GM23248 (cell line): ENCODE measurements at regions of chr2 and their contacts with region 1.

Region 1: DNA sequence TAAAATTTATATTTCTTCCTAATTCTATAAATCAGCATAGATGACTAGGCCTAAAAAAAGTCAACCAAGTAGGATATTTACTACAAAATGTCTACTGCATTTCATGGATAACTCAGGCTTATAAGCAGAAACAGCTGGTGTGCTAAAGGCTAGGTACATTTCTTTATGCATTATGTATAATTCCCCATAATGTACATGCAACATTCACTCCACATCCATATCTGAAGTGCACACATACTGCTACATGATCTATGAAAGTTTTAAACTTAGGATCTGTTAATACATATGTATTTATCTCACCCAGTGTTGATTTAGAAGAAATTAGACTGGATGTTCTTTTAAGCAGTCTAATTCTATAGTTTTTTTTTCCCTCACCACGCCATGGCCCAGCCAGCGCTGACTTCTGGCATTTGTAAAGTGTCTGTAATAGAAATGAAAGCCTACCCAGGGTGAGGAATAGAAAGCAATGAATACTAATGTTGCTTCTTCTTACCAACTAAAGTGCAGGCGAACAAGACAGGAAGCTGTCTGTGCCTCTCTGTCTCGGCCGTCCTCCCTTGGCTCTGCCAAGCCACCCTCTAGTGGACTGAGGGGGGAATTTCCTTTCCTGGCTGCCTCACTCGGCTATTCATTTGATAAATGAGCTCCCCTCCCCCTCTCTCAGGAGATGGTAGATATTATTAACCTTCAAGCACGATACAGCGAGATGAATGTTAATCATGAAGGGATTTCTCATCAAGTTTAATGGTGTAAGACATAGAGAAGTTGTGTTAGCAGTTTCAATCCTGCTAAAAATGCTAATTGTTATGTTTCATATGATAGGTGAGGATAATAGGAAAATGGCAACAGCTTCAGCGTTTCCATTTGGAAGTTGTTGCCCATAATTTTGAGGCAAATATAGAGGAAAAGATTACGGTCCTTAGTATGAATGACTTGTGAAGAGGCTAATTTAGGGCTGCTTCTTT is 384.5 kb downstream of the MTX2 start:
- DNase-seq: peak; percentile 91
- H3K4me3 ChIP-seq: peak overlapping the region; percentile 19; the same call in 1 of the 2 replicates
- H3K27ac ChIP-seq: peak overlapping the region; percentile 23
- H3K4me1 ChIP-seq: peaks cover 14% of the 10 kb centered on the region
- H3K27me3 ChIP-seq: no peaks in the 10 kb centered on the region

Region 2: DNA sequence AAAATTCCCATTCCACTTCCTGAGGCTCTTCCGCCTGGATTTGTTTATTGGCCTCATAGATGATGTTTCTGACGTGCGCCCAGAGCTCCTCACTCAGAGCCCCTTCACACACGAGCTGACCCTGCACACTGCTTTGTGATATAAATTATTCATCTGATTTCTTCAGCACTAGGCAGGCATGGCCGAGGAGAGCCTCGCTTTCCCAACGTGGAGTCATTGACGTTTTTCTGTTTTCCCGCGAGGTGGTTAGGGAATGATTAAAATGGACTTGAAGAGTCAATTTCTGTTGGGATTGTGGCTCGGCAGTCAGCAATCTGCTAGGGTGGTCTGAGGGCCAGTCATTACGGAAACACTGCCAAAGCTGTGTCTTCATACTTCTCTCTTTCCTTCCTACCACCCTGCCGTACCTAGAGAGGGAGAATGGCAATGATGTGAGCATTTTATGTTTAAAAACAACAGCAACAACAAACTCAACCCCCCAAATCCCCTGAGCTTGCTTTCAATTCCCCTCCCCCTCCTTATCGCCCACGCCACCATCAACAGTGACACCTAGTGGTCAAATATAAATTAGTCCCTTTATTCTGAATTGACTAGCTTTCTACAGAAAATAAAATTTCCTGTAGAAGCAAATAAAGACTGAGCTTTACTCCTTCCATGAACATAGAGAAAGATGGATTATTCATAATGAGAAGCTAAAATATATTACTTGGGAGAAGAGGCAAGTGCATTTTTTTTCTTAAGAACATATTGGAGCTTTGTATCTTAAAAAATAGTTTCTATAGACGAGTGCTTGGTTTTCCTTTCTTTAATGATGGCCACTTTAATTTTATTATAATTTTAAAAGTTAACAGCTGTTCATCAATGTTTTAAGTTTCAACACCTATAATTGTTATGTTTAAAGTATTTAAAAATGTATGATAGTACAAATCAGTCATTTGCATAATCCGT is 99.4 kb before region 1 on chr2:
- in situ Hi-C with region 1: no loop called
- DNase-seq: peak; percentile 79
- H3K4me3 ChIP-seq: peak overlapping the region; percentile 66
- H3K27ac ChIP-seq: peak overlapping the region; percentile 79
- H3K4me1 ChIP-seq: peaks cover 22% of the 10 kb centered on the region
- H3K27me3 ChIP-seq: no peaks in the 10 kb centered on the region

Region 3: DNA sequence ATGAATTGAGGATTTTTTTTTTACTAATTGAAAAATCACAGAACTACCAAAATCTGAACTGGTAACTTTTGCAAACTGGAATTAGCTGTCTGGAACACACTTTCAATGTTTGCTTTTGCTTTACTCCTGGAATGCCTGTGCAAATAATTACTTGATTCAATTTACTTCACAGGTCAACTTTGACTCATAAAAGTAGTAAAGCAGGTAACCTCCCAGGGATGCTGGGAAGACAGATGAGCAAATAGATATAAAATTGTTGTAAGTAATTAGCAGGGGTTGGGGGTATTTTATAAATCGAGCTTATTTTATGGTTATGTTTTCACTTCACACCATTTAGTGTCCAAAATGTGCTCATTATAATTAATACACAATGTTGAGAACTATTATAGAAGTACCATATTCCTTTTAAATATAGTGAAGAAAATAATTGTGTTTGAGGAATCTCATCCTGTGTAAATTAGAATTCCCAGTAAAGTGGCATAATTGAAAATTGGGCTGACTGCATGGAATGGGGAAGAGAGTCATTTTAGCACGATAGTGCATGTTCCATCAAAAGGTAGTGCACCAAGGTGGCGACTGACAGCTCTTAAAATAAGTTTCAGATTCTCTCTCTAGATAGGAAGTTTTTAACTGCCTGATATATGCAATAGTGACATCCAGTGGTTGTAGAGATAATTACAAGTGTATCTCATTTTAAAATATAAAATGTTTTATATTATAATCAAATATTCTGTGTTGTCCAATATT is 160.7 kb after region 1 on chr2:
- in situ Hi-C with region 1: loop called (anchors 10 kb)
- DNase-seq: peak; percentile 65
- H3K4me3 ChIP-seq: no peak overlapping the region
- H3K27ac ChIP-seq: no peak overlapping the region
- H3K4me1 ChIP-seq: 0 out of 2 replicates have a peak, but pooled peaks cover 4% of the 10 kb centered on the region
- H3K27me3 ChIP-seq: no peaks in the 10 kb centered on the region

Region 4: DNA sequence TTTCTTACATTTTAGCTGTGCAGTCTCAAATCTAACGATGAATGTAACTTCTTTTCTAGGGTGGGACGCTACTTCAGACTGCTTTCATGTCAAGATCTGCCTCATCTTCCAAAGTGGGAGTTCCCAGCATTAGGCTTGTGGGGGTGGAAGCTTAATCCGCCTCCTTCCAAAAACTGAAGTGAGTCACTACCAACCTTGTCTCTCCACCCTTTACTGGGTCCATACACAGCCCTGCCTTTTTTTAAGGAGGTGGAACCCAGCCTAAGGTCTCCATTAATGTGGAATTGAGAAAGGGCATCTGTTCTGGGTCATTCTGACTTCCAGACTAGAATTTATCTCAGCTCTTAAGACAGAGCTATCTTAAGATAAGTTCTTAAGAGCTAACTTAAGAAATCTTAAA is 652.8 kb after region 1 on chr2:
- in situ Hi-C with region 1: no loop called
- DNase-seq: peak; percentile 59
- H3K4me3 ChIP-seq: no peak overlapping the region
- H3K27ac ChIP-seq: no peak overlapping the region
- H3K4me1 ChIP-seq: peaks cover 9% of the 10 kb centered on the region
- H3K27me3 ChIP-seq: no peaks in the 10 kb centered on the region